Activated T-helper 1 cell treated with anti-CD3 and anti-CD28 coated beads, Interleukin-12 subunit alpha, Interleukin-12 subunit beta, Interleukin-2, Interleukin-4 antibody, amounts not matched to agents 30 ng/mL and 10 ng/mL and 1 ng/mL, durations not matched to agents 14 hours and 24 hours and 36 hours (primary cell): ENCODE measurements at regions of chr2 and their contacts with region 1.

Region 1: GRCh38 chr2:156341452-156342253 is 9.1 kb upstream of the NR4A2 start:
- DNase-seq: peak; percentile 85
- H3K4me3 Mint-ChIP-seq: peak overlapping the region; percentile 96
- H3K27ac Mint-ChIP-seq: peak overlapping the region; percentile 99
- H3K4me1 Mint-ChIP-seq: peaks cover 57% of the 10 kb centered on the region
- H3K27me3 Mint-ChIP-seq: no peaks in the 10 kb centered on the region

Region 2: GRCh38 chr2:156253765-156254164 is 87.9 kb before region 1 on chr2:
- intact Hi-C with region 1: no loop called
- DNase-seq: no peak
- H3K4me3 Mint-ChIP-seq: peak overlapping the region; percentile 69
- H3K27ac Mint-ChIP-seq: no peak overlapping the region
- H3K4me1 Mint-ChIP-seq: no peaks in the 10 kb centered on the region
- H3K27me3 Mint-ChIP-seq: no peaks in the 10 kb centered on the region

Region 3: DNA sequence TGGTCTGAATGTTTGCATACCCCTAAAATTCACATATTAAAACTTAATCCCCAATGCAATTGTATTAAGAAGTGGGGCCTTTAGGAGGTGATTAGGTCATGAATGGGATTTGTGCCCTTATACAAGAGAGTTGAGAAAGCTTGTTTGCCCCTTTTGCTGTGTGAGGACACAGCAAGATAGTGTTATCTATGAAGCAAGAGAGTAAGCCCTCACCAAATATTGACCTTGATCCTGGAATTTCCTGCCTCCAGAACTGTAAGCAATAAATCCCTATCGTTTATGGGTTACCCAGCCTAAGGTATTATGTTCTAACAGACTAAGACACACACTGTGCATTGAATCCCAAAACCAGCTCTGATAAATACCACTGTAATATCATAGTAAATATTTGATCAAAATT is 41.3 kb before region 1 on chr2:
- intact Hi-C with region 1: no loop called
- DNase-seq: no peak
- H3K4me3 Mint-ChIP-seq: no peak overlapping the region
- H3K27ac Mint-ChIP-seq: no peak overlapping the region
- H3K4me1 Mint-ChIP-seq: no peaks in the 10 kb centered on the region
- H3K27me3 Mint-ChIP-seq: peaks cover 14% of the 10 kb centered on the region

Region 4: DNA sequence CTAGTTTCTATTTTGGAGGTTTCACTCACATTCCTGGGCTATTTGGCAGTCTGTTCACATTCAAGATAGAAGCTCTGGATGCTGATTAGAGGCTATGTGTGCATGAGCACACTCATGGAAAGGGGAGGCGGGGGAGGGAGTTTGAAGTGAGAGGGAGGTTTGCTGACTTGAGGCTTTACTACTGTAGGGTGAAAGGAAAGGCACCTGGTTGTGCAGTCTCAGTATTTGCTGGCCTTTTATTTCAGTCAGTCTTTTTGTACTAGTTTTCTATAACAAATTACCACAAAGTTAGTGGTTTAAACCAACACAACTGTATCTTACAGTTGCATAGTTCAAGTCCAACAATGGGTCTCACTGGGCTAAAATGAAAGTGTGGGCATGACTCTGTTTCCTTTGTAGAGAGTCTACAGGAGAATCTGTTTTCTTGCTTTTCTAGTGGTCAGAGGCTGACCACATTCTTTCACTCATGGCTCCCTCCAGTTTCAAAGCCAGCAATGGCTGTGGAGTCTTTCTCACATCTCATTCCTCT is 38.5 kb after region 1 on chr2:
- intact Hi-C with region 1: loop called (anchors 1 kb)
- DNase-seq: no peak
- H3K4me3 Mint-ChIP-seq: no peak overlapping the region
- H3K27ac Mint-ChIP-seq: peak overlapping the region; percentile 73
- H3K4me1 Mint-ChIP-seq: peaks cover 45% of the 10 kb centered on the region
- H3K27me3 Mint-ChIP-seq: no peaks in the 10 kb centered on the region

Region 5: DNA sequence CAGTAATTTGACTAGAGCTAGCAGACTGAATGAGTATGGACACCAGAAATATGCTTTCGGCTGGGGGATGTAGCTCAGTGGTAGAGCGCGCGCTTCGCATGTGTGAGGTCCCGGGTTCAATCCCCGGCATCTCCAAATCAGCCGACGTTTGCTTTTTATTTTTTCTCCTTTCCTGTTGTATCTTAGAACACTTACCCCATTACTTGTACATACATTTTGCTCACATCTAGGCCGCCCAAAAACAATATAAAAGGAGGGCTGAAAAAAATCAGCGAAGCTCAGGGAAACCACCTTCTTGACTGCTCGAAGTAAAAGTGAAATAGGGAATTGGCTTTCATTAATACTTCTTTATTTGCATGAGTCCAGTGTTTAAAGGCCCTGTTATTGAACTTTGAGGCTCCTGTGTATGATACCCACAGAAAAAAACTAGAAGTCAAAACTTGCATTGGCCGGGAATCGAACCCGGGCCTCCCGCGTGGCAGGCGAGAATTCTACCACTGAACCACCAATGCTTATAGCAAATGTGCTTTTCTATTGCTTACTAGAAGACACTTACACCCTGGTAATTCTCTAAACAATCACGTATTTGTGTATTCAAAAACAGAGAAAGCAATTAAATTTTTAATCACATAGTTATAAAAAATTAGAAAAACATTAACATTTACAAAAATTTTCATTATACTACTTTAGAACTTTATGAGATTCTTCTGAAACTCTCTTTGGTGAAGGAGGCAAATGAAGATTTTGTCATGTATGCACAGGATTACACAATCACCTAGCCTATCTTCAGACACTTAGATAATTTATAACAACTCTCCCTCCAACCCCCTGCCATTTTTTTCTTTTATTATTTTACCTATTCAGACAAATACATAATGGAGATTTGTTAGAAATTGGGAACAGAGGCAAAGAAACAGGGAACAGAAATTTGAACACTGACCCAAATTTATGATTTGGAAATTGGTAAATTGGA is 59.3 kb after region 1 on chr2:
- intact Hi-C with region 1: loop called (anchors 1 kb)
- DNase-seq: peak; percentile 70
- H3K4me3 Mint-ChIP-seq: peak overlapping the region; percentile 95
- H3K27ac Mint-ChIP-seq: peak overlapping the region; percentile 91
- H3K4me1 Mint-ChIP-seq: peaks cover 37% of the 10 kb centered on the region
- H3K27me3 Mint-ChIP-seq: peaks cover 4% of the 10 kb centered on the region

Region 6: GRCh38 chr2:156580501-156580900 is 238.8 kb after region 1 on chr2:
- intact Hi-C with region 1: no loop called
- DNase-seq: no peak
- H3K4me3 Mint-ChIP-seq: no peak overlapping the region
- H3K27ac Mint-ChIP-seq: no peak overlapping the region
- H3K4me1 Mint-ChIP-seq: peaks cover 27% of the 10 kb centered on the region
- H3K27me3 Mint-ChIP-seq: no peaks in the 10 kb centered on the region

Region 7: DNA sequence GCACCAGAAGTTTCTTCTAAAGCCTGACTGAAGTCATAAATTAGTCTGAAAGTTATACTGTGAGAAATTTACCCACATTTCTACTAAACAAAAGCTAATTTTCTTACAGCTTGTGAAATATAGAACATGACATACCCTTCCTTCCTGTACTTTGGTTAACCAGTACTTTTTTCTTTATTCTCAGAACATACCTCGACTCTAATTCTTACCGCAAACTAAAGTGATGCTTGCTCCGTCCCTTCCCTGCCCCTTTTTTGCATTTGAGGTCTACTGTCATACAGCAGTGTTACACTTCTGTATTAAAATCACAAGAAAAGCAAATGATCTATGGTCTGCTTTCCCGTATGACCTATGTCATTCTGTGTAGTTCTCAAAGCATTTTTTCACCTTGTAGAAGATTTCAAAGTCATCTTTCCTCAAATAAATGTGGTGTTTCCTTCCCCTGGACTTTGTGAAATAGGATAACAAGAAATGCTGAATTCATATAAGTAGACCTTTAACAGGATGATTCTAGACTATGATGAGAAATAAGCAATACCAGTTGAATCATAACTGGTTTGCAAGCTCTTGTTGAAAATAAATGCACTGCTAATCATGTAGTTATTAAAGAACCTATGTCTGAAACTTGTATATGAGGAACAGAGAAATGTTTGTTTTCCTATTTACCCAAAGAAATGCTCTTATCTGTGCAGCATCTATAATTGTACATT is 1071.8 kb after region 1 on chr2:
- intact Hi-C with region 1: loop called (anchors 1 kb)
- DNase-seq: peak; percentile 60
- H3K4me3 Mint-ChIP-seq: peak overlapping the region; percentile 82
- H3K27ac Mint-ChIP-seq: peak overlapping the region; percentile 91
- H3K4me1 Mint-ChIP-seq: peaks cover 84% of the 10 kb centered on the region
- H3K27me3 Mint-ChIP-seq: no peaks in the 10 kb centered on the region

Region 8: GRCh38 chr2:157876066-157876787 is 1534.6 kb after region 1 on chr2 and contains the start of gene ACVR1:
- intact Hi-C with region 1: loop called (anchors 5 kb)
- DNase-seq: peak; percentile 80
- H3K4me3 Mint-ChIP-seq: peak within 1 kb of the TSS; percentile 98
- H3K27ac Mint-ChIP-seq: peak within 1 kb of the TSS; percentile 96
- H3K4me1 Mint-ChIP-seq: peaks cover 65% of the 10 kb centered on the region
- H3K27me3 Mint-ChIP-seq: no peaks in the 10 kb centered on the region
- total RNA-seq, gene ACVR1: 44.0 and 46.5 TPM in 2 replicates